ENCODE measurements at regions of chr14 and their contacts with region 1.

Region 1: DNA sequence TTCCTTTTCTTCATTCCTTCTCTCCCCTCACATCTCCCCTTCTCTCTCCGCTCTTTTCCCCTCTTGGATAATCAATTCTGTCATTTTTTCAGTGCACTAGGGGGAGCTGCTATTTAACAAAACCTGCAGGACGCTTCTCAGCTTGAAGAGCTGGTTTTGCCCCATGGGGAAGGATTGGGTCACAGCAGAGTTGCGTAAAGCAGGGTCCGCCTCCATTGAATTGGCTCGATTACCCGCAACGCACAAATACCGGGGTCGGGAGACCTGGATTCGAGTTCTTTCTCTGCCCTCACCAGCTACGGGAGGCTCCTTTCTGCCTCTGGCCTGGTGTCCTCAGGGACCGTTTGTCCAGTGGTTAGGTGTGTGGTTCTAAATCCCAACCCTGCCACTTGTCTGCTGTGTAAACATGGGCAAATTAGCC is 42.1 kb upstream of the CHGA start:
- DNase-seq: no peak
- ATAC-seq: peak in 3 of 4 donors; percentile 19 to 38 (median 35)
- H3K4me3 ChIP-seq: no peak overlapping the region
- H3K27ac ChIP-seq: no peak overlapping the region
- H3K4me1 ChIP-seq: peaks cover 0 to 16% (median 10%) of the 10 kb centered on the region in 12 donors
- H3K27me3 ChIP-seq: peaks cover 0 to 15% (median 0%) of the 10 kb centered on the region in 9 donors
- CTCF ChIP-seq: peak in 11 of 12 donors; percentile 6 to 35 (median 25)
- POLR2A ChIP-seq: no peak

Region 2: DNA sequence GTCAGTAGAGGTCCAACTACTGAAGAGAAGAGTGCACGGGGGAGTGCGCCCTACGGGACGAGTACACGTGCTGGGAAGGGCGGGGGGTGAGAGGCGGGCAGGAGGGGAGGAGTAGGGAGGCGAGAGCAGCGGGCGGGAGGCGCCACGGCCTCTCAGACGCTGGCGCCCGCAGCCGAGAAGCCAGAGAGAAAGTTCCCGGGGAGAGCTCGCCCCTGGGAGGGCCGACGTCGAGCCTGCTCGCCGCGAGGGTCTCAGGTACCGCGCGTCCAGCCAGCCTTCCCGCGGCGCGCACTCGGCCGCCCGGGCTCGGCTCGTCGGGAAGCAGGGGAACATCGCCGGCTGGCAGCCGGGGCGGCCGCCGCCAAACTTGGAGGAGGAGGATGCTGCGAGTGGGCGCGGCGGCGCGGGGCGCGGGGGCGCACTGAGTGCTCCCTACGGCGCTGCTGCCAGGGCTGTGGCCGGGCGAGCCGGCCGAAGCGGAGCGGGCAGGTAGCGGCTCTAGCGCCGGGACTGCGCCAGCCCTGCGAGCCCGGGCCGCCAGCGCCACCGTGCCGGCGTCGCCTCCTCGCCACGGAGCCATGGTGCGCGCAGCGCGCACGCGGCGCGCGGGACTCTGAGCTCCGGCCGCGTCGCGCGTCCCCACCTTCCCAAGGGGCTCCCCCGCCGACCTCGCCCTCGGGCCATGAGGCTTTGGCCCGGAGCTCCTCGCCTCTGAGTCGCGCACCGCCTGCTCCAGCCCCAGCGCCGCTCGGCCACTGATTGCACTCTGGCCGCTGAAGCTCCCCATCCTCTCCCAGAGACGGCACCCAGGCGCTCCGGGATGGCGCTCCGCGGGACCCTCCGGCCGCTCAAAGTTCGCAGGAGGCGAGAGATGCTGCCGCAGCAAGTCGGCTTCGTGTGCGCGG is 557.6 kb before region 1 on chr14 and contains the start of gene SLC24A4:
- intact Hi-C with region 1: no loop called
- DNase-seq: peak in 1 of 5 donors; percentile 27
- ATAC-seq: peak in 2 of 4 donors; percentile 66 to 69
- H3K4me3 ChIP-seq: peak within 1 kb of the TSS; percentile 14 to 54 (median 45)
- H3K27ac ChIP-seq: no peak within 1 kb of the TSS
- H3K4me1 ChIP-seq: peaks cover 0 to 18% (median 8%) of the 10 kb centered on the region in 12 donors
- H3K27me3 ChIP-seq: peaks cover 29 to 83% (median 50%) of the 10 kb centered on the region in 9 donors
- CTCF ChIP-seq: no peak
- POLR2A ChIP-seq: no peak
- total RNA-seq, gene SLC24A4: 0.05 to 1.6 (median 0.24) TPM

Region 3: DNA sequence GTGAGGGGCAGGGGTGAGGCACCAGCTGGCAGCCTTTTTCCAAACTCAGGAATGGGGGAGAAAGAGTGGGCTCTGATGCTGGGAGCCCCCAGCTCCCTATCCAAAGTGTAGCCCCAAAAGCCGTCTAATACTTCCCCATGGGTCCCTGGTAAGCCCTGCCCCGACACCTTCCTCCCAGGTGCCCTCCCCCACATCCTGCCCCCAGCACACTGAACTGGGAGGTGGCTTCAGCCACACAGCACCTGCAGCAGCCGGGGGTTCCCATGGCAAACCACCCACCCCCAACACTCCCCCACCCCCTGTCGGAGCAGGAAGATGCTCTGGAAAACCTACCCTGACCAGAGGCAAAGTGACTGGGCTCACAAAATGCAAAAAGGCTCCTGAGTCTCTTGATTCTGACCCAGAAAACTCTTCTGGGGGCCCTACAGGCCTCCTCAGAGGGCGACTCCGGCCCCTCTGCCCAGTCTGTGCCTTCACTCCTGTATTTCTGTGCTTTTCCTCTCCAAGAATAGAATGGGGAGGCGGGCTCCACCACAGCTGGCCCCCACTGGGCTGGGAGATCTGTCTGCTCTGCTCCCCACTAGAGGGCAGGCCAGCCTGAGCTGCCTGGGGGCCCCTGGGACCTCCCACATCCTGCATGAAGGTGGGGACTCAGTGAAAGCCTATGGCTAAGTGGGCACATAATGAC is 153.2 kb after region 1 on chr14:
- intact Hi-C with region 1: no loop called
- DNase-seq: no peak
- ATAC-seq: peak in 3 of 4 donors; percentile 10 to 54 (median 36)
- H3K4me3 ChIP-seq: no peak overlapping the region
- H3K27ac ChIP-seq: peak overlapping the region in 5 of 12 donors; percentile 2 to 90 (median 29)
- H3K4me1 ChIP-seq: peaks cover 13 to 75% (median 50%) of the 10 kb centered on the region in 12 donors
- H3K27me3 ChIP-seq: no peaks in the 10 kb centered on the region
- CTCF ChIP-seq: peak in 10 of 12 donors; percentile 35 to 63 (median 50)
- POLR2A ChIP-seq: no peak

Region 4: GRCh38 chr14:93132470-93133065 is 251.7 kb after region 1 on chr14:
- intact Hi-C with region 1: loop called in 2 of 10 experiments (anchors 5 to 10 kb)
- DNase-seq: peak in 3 of 5 donors; percentile 45 to 54 (median 46)
- ATAC-seq: peak; percentile 46 to 88 (median 76)
- H3K4me3 ChIP-seq: no peak overlapping the region
- H3K27ac ChIP-seq: peak overlapping the region in 6 of 12 donors; percentile 10 to 49 (median 34)
- H3K4me1 ChIP-seq: peaks cover 0 to 24% (median 0%) of the 10 kb centered on the region in 12 donors
- H3K27me3 ChIP-seq: no peaks in the 10 kb centered on the region
- CTCF ChIP-seq: peak; percentile 28 to 61 (median 51)
- POLR2A ChIP-seq: no peak

Region 5: DNA sequence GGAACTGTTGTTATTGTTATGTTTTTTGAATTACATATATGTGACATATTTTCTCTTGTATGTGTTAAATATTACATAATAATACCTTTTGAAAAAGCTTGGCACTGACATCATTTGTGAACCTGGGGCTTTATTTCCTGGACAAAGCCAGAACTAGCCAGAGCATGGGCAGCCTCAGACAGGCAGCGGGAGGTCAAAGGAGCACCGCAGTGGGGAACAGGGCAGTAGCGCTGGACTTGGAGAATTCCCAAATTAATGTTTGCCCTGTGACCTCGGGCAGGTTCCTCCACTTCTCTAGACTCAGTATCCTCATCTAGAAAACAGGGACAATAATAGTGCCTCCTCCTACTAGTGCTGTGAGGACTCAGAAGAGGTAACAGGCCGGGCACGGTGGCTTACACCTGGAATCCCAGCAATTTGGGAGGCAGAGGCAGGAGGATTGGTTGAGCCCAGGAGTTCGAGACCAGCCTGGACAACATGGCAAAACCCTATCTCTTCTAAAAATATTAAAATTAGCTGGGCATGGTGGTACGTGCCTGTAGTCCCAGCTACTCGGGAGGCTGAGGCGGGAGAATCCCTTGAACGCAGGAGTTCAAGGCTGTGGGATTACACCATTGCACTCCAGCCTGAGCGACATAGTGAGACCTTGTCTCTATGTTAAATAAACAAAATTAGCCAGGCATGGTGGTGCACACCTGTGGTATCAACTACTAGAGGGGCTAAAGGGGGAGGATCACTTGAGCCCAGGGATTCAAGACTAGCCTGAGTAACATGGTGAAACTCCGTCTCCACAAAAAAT is 262.2 kb after region 1 on chr14:
- intact Hi-C with region 1: loop called in 4 of 10 experiments (anchors 2 to 10 kb)
- DNase-seq: no peak
- ATAC-seq: no peak
- H3K4me3 ChIP-seq: no peak overlapping the region
- H3K27ac ChIP-seq: no peak overlapping the region
- H3K4me1 ChIP-seq: peaks cover 0 to 3% (median 0%) of the 10 kb centered on the region in 12 donors
- H3K27me3 ChIP-seq: no peaks in the 10 kb centered on the region
- CTCF ChIP-seq: no peak
- POLR2A ChIP-seq: no peak

Region 6: GRCh38 chr14:93175492-93175891 is 294.6 kb after region 1 on chr14:
- intact Hi-C with region 1: loop called in 1 of 10 experiments (anchors 5 kb)
- DNase-seq: no peak
- ATAC-seq: no peak
- H3K4me3 ChIP-seq: no peak overlapping the region
- H3K27ac ChIP-seq: no peak overlapping the region
- H3K4me1 ChIP-seq: peaks cover 0 to 2% (median 0%) of the 10 kb centered on the region in 12 donors
- H3K27me3 ChIP-seq: peaks cover 0 to 11% (median 0%) of the 10 kb centered on the region in 9 donors
- CTCF ChIP-seq: no peak
- POLR2A ChIP-seq: no peak

Measured in heart left ventricle (tissue), 16 donors.